Posterior vena cava (tissue), 2 donors: ENCODE measurements at regions of chr11 and their contacts with region 1.

Region 1: DNA sequence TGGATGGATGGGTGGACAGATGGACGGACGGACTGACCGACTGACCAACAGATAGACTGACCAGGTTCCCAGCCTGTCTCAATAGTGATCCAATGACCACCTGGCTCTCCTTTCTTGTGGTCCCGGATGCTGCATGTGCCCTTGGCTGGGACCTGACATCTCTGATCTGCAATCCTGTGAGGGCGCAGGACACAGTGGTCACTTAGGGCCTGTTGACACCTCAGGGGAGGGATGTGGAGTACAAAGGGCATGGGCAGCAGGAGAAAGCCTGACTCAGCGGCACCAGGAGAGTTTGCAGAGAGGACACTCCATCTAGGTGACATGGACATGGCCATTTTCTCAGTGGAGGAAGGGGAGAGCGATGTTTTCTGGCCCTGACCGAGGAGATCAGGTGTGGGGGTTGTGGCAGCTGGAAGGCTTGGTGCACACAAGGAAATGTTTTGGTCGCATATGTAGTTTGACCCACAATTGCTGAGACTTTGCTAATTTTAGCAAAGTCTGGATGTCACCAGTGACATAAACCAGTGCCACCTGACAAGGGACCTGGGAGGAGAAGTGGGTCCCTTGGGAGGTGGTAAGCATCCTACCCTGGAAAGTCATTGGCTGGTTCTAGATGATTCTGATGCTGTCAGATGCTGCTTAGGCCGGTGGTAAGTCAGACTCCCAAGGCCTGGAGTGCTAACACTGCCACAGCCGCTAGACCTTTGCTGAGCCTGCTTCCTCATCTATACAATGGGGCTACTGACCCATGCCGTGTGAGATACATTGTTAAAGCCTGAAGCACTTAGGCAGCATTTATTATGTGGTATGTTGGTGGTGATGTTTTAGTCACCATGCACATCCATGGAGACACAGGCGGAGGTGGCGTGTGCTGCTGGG is 50.7 kb downstream of the CD82 start:
- DNase-seq: peak; percentile 46

Region 2: DNA sequence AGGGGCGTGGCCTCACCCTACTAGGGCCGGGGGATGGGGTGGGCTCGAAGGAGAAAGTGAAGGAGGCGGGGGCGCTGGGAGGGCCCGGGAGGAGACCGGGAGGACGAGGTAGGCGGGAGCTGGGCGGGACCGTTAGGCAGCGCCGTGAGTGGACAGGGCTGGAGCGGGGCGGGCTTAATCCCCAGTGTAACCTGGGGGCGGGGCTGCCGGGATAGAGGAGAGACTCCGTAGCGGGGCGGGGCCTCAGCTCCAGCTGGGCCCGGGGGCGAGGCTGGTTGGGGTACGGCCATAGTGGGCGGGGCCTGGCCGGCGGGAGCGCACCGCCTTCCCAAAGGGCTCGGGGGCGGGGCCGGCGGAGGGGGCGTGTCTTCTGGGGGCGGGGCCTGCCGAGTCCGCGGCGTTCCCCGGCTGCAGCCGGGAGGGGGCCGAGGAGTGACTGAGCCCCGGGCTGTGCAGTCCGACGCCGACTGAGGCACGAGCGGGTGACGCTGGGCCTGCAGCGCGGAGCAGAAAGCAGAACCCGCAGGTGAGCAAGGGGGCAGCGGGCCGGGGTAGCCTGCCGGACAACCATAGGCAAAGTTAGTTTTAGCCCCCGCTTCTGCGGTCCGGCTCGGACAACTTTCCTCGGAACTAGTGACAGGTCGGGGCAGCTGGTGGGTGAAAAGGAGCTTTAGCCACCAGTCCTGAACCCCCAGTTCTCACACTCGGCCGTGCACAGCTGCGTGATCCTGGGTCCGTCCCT is 50.8 kb before region 1 on chr11 and contains the start of gene CD82:
- intact Hi-C with region 1: loop called in 1 of 2 experiments (anchors 2 kb)
- DNase-seq: peak; percentile 100
- total RNA-seq, gene CD82: 26.8 to 28.6 TPM

Region 3: DNA sequence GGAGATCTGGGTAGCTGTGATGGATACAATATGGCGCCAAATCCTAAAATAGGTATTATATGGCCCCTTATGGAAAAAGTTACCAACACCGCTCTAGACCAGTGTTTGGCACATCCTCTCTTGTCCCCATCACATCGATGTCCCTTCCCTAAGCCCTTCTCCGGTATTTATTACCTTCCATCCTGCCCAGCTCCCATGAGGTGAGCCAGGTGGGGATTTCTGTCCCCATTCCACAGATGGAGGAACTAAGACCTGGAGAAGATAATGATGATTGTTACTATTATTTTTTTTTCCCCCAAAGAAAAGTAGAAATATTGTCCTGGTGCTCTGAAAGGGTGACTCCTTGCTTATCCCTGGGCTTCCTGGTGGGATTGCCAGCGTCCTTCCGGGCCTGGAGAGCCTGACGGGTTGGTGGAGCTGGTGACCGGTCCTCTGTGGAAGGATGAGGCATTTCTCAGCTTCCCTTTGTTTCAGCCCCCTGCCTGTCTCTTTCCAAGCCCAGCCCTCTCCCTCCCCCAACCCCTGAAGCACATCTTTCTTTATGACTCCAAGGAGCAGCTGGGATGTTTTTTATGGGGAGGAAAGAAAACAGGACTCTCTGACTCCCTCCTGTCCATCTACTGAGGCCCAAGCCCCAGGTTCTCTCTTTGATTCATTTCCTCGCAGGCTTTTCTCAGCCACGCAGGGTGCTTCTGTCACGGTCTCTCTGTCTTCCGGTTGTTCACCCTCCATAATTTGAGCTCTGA is 269.1 kb after region 1 on chr11:
- intact Hi-C with region 1: loop called in 1 of 2 experiments (anchors 1 kb)
- DNase-seq: no peak